ENCODE measurements at regions of chr6 and their contacts with region 1.

Region 1: GRCh38 chr6:46288835-46289234 is 118.1 kb upstream of the ENPP5 start:
- DNase-seq: no peak
- H3K4me3 Mint-ChIP-seq: no peak overlapping the region
- H3K27ac Mint-ChIP-seq: no peak overlapping the region
- H3K4me1 Mint-ChIP-seq: peaks cover 18% of the 10 kb centered on the region
- H3K27me3 Mint-ChIP-seq: peaks cover 18% of the 10 kb centered on the region

Region 2: GRCh38 chr6:46325561-46326530 is 37.0 kb after region 1 on chr6:
- CTCF ChIA-PET with region 1: no interaction called
- POLR2A ChIA-PET with region 1: no interaction called
- intact Hi-C with region 1: loop called (anchors 5 kb)
- DNase-seq: peak; percentile 51
- H3K4me3 Mint-ChIP-seq: peak overlapping the region; percentile 17
- H3K27ac Mint-ChIP-seq: peak overlapping the region; percentile 31
- H3K4me1 Mint-ChIP-seq: peaks cover 17% of the 10 kb centered on the region
- H3K27me3 Mint-ChIP-seq: peaks cover 12% of the 10 kb centered on the region

Region 3: DNA sequence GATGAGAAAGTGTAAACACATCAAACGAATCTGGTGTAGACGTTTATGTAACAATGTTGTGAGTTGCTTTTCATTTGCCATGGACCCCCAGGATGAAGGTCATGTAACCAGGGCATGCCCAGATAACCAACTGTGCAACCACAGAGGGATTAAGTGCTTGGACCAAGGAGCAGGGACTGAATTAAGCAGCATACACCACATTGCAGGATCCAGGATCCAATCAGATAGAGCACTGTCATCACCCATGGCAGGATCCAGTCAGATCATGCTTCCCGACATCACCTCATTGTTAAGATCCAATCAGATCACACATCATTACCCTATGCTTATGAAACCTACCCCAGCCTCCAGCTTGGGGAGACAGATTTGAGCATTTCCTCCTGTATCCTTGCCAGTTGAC is 276.7 kb after region 1 on chr6:
- CTCF ChIA-PET with region 1: no interaction called
- POLR2A ChIA-PET with region 1: no interaction called
- intact Hi-C with region 1: no loop called
- DNase-seq: no peak
- H3K4me3 Mint-ChIP-seq: no peak overlapping the region
- H3K27ac Mint-ChIP-seq: no peak overlapping the region
- H3K4me1 Mint-ChIP-seq: no peaks in the 10 kb centered on the region
- H3K27me3 Mint-ChIP-seq: peaks cover 12% of the 10 kb centered on the region

Measured in activated CD4-positive, alpha-beta memory T cell treated with anti-CD3 and anti-CD28 coated beads for 36 hours (primary cell).